HepG2 (cell line): ENCODE measurements at regions of chr11 and their contacts with region 1.

Region 1: GRCh38 chr11:11078344-11079086 is 220.7 kb upstream of the ZBED5 start:
- DNase-seq: no peak
- ATAC-seq: no peak
- H3K4me3 ChIP-seq: no peak overlapping the region
- H3K27ac ChIP-seq: no peak overlapping the region
- H3K4me1 ChIP-seq: no peaks in the 10 kb centered on the region
- H3K27me3 ChIP-seq: peaks cover 0 to 7% of the 10 kb centered on the region in 2 experiments; a peak in 3 of 5 replicates
- CTCF ChIP-seq: no peak
- EP300 ChIP-seq: no peak
- POLR2A ChIP-seq: no peak
- RAD21 ChIP-seq: no peak

Region 2: DNA sequence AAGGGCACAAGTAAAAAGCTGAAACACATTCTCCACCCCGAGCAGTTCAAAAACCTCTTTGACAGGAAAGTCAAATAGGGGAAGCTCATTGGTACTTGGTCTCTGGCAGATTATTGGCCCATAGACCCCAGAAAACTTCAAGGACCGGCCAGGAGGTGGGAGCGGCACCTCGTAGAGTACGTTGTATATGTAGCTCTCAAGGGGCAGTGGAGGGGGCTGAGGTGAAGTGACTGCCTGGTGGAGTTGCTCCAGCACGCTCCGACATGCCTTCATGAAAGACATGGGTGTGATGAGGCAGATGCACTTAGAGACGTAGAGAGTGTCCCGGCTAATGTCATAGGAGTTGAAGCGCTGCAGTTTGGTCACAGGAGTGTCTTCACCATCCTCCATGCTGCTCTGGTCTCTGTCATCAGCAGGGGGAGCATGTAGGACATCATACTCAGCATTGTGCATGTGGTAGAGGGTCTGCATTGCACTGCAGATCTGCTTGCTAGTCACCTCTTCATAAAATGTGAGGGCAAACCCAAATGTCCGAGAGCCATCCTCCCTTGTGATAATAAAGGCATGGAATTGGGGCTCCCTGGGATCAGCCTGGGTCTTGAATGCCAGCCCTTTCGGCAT is 1874.7 kb before region 1 on chr11:
- CTCF ChIA-PET with region 1: no interaction called
- POLR2A ChIA-PET with region 1: no interaction called
- in situ Hi-C with region 1: no loop called
- intact Hi-C with region 1: no loop called
- DNase-seq: peak; percentile 10
- ATAC-seq: peak; percentile 79
- H3K4me3 ChIP-seq: no peak overlapping the region
- H3K27ac ChIP-seq: no peak overlapping the region
- H3K4me1 ChIP-seq: no peaks in the 10 kb centered on the region
- H3K27me3 ChIP-seq: no peaks in the 10 kb centered on the region
- CTCF ChIP-seq: peak; percentile 58
- EP300 ChIP-seq: no peak
- POLR2A ChIP-seq: no peak
- RAD21 ChIP-seq: no peak

Region 3: GRCh38 chr11:10488581-10489443 is 589.7 kb before region 1 on chr11:
- CTCF ChIA-PET with region 1: no interaction called
- POLR2A ChIA-PET with region 1: no interaction called
- in situ Hi-C with region 1: no loop called
- intact Hi-C with region 1: loop called (anchors 10 kb)
- DNase-seq: no peak
- ATAC-seq: no peak
- H3K4me3 ChIP-seq: no peak overlapping the region
- H3K27ac ChIP-seq: no peak overlapping the region
- H3K4me1 ChIP-seq: peaks cover 21% of the 10 kb centered on the region
- H3K27me3 ChIP-seq: no peaks in the 10 kb centered on the region
- CTCF ChIP-seq: no peak
- EP300 ChIP-seq: no peak
- POLR2A ChIP-seq: no peak
- RAD21 ChIP-seq: no peak